ENCODE measurements at regions of chr11 and their contacts with region 1.

Region 1: DNA sequence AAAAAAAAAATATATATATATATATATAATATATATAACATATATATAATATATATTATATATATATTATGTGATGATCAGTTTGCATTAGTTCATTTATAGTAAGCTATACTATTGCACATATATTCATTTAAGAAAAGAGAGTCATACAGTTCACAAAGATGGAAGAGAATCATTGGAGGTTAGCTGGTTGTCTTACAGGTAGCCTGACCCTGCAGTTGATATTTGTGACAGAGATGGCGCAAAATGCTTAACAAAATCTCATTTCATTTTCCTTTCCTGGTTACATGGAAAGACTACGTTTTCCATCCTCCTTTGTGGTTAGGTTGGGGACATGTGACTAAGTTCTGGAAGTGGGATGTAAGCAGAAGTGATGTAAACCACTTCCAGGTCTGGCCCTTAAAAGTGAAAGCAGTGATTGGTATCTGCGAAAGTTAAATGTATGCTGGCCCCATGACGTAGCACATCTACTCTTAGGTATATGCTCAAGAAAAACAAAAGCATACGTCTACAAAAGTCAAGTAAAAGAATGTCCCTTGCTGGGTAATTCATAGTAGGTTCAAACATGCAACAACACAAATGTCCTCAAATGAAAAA is 7.2 kb upstream of the TMEM135 start:
- DNase-seq: peak in 1 of 2 experiments; percentile 47
- H3K4me3 ChIP-seq: no peak overlapping the region
- H3K4me3 Mint-ChIP-seq: no peak overlapping the region
- H3K27ac Mint-ChIP-seq: no peak overlapping the region
- H3K4me1 ChIP-seq: peaks cover 25% of the 10 kb centered on the region
- H3K4me1 Mint-ChIP-seq: peaks cover 34% of the 10 kb centered on the region
- H3K27me3 ChIP-seq: no peaks in the 10 kb centered on the region
- H3K27me3 Mint-ChIP-seq: no peaks in the 10 kb centered on the region
- CTCF ChIP-seq: no peak

Region 2: GRCh38 chr11:86938900-86939880 is 91.4 kb before region 1 on chr11:
- CTCF ChIA-PET with region 1: interaction called, 4 read pairs
- POLR2A ChIA-PET with region 1: no interaction called
- intact Hi-C with region 1: loop called (anchors 1 kb)
- DNase-seq: peak in 1 of 2 experiments; percentile 75
- H3K4me3 ChIP-seq: no peak overlapping the region
- H3K4me3 Mint-ChIP-seq: peak overlapping the region; percentile 60
- H3K27ac Mint-ChIP-seq: peak overlapping the region; percentile 84
- H3K4me1 ChIP-seq: peaks cover 51% of the 10 kb centered on the region
- H3K4me1 Mint-ChIP-seq: peaks cover 52% of the 10 kb centered on the region
- H3K27me3 ChIP-seq: no peaks in the 10 kb centered on the region
- H3K27me3 Mint-ChIP-seq: no peaks in the 10 kb centered on the region
- CTCF ChIP-seq: peak; percentile 79 to 83

Region 3: GRCh38 chr11:86990515-86990914 is 40.0 kb before region 1 on chr11:
- CTCF ChIA-PET with region 1: interaction called, 9 read pairs
- POLR2A ChIA-PET with region 1: interaction called, 3 read pairs
- intact Hi-C with region 1: loop called (anchors 1 kb)
- DNase-seq: peak; percentile 58 to 70
- H3K4me3 ChIP-seq: no peak overlapping the region
- H3K4me3 Mint-ChIP-seq: no peak overlapping the region
- H3K27ac Mint-ChIP-seq: peak overlapping the region; percentile 8
- H3K4me1 ChIP-seq: peaks cover 28% of the 10 kb centered on the region
- H3K4me1 Mint-ChIP-seq: peaks cover 37% of the 10 kb centered on the region
- H3K27me3 ChIP-seq: no peaks in the 10 kb centered on the region
- H3K27me3 Mint-ChIP-seq: no peaks in the 10 kb centered on the region
- CTCF ChIP-seq: no peak

Region 4: DNA sequence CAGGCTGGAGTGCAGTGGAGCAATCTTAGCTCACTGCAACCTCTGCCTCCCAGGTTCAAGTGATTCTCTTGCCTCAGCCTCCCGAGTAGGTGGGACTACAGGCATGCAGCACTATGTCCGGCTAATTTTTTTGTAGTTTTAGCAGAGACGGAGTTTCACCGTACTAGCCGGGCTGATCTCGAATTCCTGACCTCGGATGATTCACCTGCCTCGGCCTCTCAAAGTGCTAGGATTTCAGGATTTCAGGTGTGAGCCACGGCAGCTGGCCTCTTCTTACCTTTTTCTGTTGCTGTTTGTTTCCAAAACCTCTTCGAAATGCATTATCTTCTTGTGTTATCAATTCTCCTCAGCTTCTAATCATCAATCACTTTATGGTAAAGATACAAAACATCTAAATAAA is 14.9 kb before region 1 on chr11:
- CTCF ChIA-PET with region 1: no interaction called
- POLR2A ChIA-PET with region 1: no interaction called
- intact Hi-C with region 1: loop called (anchors 1 kb)
- DNase-seq: no peak
- H3K4me3 ChIP-seq: no peak overlapping the region
- H3K4me3 Mint-ChIP-seq: no peak overlapping the region
- H3K27ac Mint-ChIP-seq: no peak overlapping the region
- H3K4me1 ChIP-seq: peaks cover 15% of the 10 kb centered on the region
- H3K4me1 Mint-ChIP-seq: peaks cover 27% of the 10 kb centered on the region
- H3K27me3 ChIP-seq: no peaks in the 10 kb centered on the region
- H3K27me3 Mint-ChIP-seq: no peaks in the 10 kb centered on the region
- CTCF ChIP-seq: no peak